Activated naive CD4-positive, alpha-beta T cell treated with anti-CD3 and anti-CD28 coated beads for 36 hours (primary cell): ENCODE measurements at regions of chr6 and their contacts with region 1.

Region 1: DNA sequence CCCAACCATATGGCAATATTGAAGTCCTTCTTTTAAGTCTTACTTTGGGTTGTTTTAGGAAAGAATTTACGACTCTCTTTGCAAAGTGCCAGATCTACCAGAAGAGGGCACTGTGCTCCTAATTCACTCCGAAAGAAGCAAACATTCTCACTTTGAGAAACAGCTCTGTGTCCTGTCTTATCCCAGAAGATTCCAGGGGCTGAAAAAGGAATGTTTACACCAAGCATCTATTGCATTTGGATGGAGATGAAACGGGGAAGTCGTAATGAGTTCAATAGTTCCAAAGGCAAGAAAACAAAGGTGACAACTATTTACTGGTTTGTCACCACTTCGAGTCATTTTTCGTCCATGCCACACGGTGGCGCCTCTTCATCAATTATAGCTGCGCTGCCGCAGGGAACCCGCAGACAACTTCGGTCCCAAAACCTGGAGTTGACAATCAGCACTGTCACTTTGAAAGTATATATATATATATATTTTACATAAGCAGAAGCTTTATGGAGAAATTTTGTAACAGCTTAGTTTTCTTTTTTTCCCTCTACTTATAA is 121.6 kb downstream of the MOXD1 start:
- DNase-seq: peak; percentile 78
- H3K4me3 Mint-ChIP-seq: peak overlapping the region; percentile 64
- H3K27ac Mint-ChIP-seq: no peak overlapping the region
- H3K4me1 Mint-ChIP-seq: no peaks in the 10 kb centered on the region
- H3K27me3 Mint-ChIP-seq: peaks cover 14% of the 10 kb centered on the region

Region 2: GRCh38 chr6:131914967-131915751 is 364.5 kb before region 1 on chr6:
- CTCF ChIA-PET with region 1: interaction called, 13 read pairs
- intact Hi-C with region 1: loop called (anchors 2 kb)
- DNase-seq: peak; percentile 77
- H3K4me3 Mint-ChIP-seq: no peak overlapping the region
- H3K27ac Mint-ChIP-seq: no peak overlapping the region
- H3K4me1 Mint-ChIP-seq: peaks cover 10% of the 10 kb centered on the region
- H3K27me3 Mint-ChIP-seq: peaks cover 52% of the 10 kb centered on the region

Region 3: GRCh38 chr6:132161283-132161682 is 118.4 kb before region 1 on chr6:
- CTCF ChIA-PET with region 1: no interaction called
- intact Hi-C with region 1: no loop called
- DNase-seq: no peak
- H3K4me3 Mint-ChIP-seq: no peak overlapping the region
- H3K27ac Mint-ChIP-seq: no peak overlapping the region
- H3K4me1 Mint-ChIP-seq: no peaks in the 10 kb centered on the region
- H3K27me3 Mint-ChIP-seq: no peaks in the 10 kb centered on the region

Region 4: DNA sequence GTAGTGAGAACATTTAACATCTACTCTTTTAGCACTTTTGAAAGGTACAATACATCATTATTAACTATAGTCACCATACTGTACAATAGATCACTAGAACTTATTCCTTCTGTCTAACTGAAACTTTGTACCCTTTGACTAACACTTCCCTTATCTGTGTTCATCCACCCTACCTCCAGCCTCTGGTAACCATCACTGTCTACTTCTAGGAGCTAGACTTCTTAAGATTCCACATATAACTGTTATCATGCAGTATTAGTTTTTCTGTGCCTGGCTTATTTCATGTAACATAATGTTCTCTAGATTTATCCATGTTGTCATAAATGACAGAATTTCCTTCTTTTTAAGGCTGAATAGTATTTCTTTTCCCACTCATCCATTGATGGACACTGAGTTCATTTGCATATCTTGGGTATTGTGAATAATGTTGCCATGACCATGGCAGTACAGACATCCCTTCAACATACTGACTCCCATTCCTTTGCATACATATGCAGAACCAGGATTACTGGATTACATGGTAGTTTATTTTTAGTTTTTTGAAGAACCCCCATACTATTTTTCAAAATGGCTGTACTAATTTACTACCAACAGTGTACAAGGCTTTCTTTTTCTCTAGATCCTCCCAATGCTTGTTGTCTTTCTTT is 14.1 kb before region 1 on chr6:
- CTCF ChIA-PET with region 1: interaction called, 49 read pairs
- intact Hi-C with region 1: no loop called
- DNase-seq: no peak
- H3K4me3 Mint-ChIP-seq: no peak overlapping the region
- H3K27ac Mint-ChIP-seq: no peak overlapping the region
- H3K4me1 Mint-ChIP-seq: no peaks in the 10 kb centered on the region
- H3K27me3 Mint-ChIP-seq: peaks cover 12% of the 10 kb centered on the region

Region 5: GRCh38 chr6:132391391-132392271 is 112.0 kb after region 1 on chr6:
- CTCF ChIA-PET with region 1: interaction called, 10 read pairs
- intact Hi-C with region 1: no loop called
- DNase-seq: no peak
- H3K4me3 Mint-ChIP-seq: no peak overlapping the region
- H3K27ac Mint-ChIP-seq: no peak overlapping the region
- H3K4me1 Mint-ChIP-seq: no peaks in the 10 kb centered on the region
- H3K27me3 Mint-ChIP-seq: peaks cover 35% of the 10 kb centered on the region

Region 6: DNA sequence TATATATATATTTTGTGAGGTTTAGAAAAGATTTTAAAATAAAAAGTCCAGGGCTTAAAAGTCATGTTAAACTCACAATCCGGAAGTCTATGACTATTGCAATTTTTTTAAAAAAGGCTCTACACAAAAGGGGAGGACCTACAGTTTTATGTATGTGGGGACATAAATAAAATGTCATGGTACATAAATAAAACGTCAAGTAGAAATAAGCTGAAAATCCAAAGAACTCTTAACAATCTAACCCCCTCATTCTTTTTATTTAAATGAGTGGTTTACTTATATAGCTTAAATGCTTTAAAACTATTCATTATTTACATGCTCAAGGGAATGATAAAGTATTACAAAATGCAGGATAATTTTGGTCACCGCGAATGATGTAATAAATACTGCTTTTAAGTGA is 197.0 kb after region 1 on chr6:
- CTCF ChIA-PET with region 1: interaction called, 155 read pairs
- intact Hi-C with region 1: no loop called
- DNase-seq: no peak
- H3K4me3 Mint-ChIP-seq: no peak overlapping the region
- H3K27ac Mint-ChIP-seq: no peak overlapping the region
- H3K4me1 Mint-ChIP-seq: peaks cover 12% of the 10 kb centered on the region
- H3K27me3 Mint-ChIP-seq: no peaks in the 10 kb centered on the region

Region 7: GRCh38 chr6:132669690-132670291 is 390.1 kb after region 1 on chr6:
- CTCF ChIA-PET with region 1: interaction called, 3 read pairs
- intact Hi-C with region 1: loop called (anchors 10 kb)
- DNase-seq: no peak
- H3K4me3 Mint-ChIP-seq: no peak overlapping the region
- H3K27ac Mint-ChIP-seq: no peak overlapping the region
- H3K4me1 Mint-ChIP-seq: peaks cover 3% of the 10 kb centered on the region
- H3K27me3 Mint-ChIP-seq: no peaks in the 10 kb centered on the region